CD14-positive monocyte (primary cell): ENCODE measurements at regions of chr4 and their contacts with region 1.

Region 1: GRCh38 chr4:105146276-105147015 is at the start of gene TET2:
- DNase-seq: peak; percentile 91 to 92 (median 91)
- H3K4me3 ChIP-seq: peak within 1 kb of the TSS; percentile 99 to 100 (median 99)
- H3K4me3 Mint-ChIP-seq: peak within 1 kb of the TSS; percentile 96 to 99
- H3K27ac ChIP-seq: peak within 1 kb of the TSS; percentile 99 to 100
- H3K27ac Mint-ChIP-seq: peak within 1 kb of the TSS; percentile 100
- H3K4me1 ChIP-seq: peaks cover 39 to 48% of the 10 kb centered on the region in 2 donors
- H3K4me1 Mint-ChIP-seq: peaks cover 50% of the 10 kb centered on the region
- H3K27me3 ChIP-seq: no peaks in the 10 kb centered on the region
- H3K27me3 Mint-ChIP-seq: peaks cover 0 to 2% (median 0%) of the 10 kb centered on the region in 3 donors
- CTCF ChIP-seq: peak; percentile 6
- polyA plus RNA-seq, gene TET2: 22.6 to 47.1 (median 42.5) TPM

Region 2: DNA sequence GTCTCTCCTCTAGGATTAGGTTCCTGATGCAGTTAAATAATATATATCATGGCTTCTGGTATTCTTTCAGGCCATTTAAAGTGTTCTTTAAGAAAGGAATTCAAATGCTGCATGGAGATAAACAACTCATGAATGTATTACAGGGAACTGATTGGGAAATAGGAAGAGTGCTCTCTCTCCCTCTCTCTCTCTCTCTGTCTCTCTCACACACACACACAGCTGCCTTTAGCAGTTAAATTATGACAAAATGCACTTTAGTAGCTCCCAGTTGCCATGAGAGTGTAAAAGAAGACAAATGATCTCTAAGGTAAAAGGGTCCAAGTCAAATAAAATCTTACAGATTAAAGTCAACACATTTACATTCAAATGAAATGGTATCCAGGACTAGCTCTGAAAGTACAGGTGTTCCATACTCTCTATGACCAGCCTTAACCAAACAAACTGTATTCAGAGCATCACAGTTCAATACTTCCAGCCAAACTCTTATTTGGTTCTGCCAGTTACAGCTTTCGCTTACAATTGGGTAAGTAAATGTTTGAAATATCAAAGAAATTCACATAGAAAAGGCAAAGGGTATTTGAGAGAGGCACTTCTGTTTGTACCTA is 557.1 kb before region 1 on chr4:
- intact Hi-C with region 1: no loop called
- DNase-seq: no peak
- H3K4me3 ChIP-seq: no peak overlapping the region
- H3K4me3 Mint-ChIP-seq: no peak overlapping the region
- H3K27ac ChIP-seq: no peak overlapping the region
- H3K27ac Mint-ChIP-seq: no peak overlapping the region
- H3K4me1 ChIP-seq: no peaks in the 10 kb centered on the region
- H3K4me1 Mint-ChIP-seq: no peaks in the 10 kb centered on the region
- H3K27me3 ChIP-seq: no peaks in the 10 kb centered on the region
- H3K27me3 Mint-ChIP-seq: peaks cover 0 to 3% (median 1%) of the 10 kb centered on the region in 3 donors
- CTCF ChIP-seq: no peak

Region 3: GRCh38 chr4:105061136-105061696 is 85.2 kb before region 1 on chr4:
- intact Hi-C with region 1: loop called (anchors 5 kb)
- DNase-seq: peak; percentile 81 to 92 (median 90)
- H3K4me3 ChIP-seq: peak overlapping the region; percentile 8 to 53 (median 37)
- H3K4me3 Mint-ChIP-seq: peak overlapping the region; percentile 49 to 72
- H3K27ac ChIP-seq: peak overlapping the region; percentile 67 to 94
- H3K27ac Mint-ChIP-seq: peak overlapping the region; percentile 97 to 100 (median 99)
- H3K4me1 ChIP-seq: peaks cover 73 to 79% of the 10 kb centered on the region in 2 donors
- H3K4me1 Mint-ChIP-seq: peaks cover 76% of the 10 kb centered on the region
- H3K27me3 ChIP-seq: no peaks in the 10 kb centered on the region
- H3K27me3 Mint-ChIP-seq: peaks cover 0 to 3% (median 0%) of the 10 kb centered on the region in 3 donors
- CTCF ChIP-seq: no peak

Region 4: GRCh38 chr4:105179539-105180401 is 33.3 kb after region 1 on chr4:
- intact Hi-C with region 1: loop called in 1 of 2 experiments (anchors 5 kb)
- DNase-seq: no peak
- H3K4me3 ChIP-seq: no peak overlapping the region
- H3K4me3 Mint-ChIP-seq: no peak overlapping the region
- H3K27ac ChIP-seq: peak overlapping the region in 1 of 2 donors; percentile 47
- H3K27ac Mint-ChIP-seq: peak overlapping the region in 1 of 7 donors; percentile 4
- H3K4me1 ChIP-seq: no peaks in the 10 kb centered on the region
- H3K4me1 Mint-ChIP-seq: peaks cover 9% of the 10 kb centered on the region
- H3K27me3 ChIP-seq: no peaks in the 10 kb centered on the region
- H3K27me3 Mint-ChIP-seq: no peaks in the 10 kb centered on the region
- CTCF ChIP-seq: no peak

Region 5: DNA sequence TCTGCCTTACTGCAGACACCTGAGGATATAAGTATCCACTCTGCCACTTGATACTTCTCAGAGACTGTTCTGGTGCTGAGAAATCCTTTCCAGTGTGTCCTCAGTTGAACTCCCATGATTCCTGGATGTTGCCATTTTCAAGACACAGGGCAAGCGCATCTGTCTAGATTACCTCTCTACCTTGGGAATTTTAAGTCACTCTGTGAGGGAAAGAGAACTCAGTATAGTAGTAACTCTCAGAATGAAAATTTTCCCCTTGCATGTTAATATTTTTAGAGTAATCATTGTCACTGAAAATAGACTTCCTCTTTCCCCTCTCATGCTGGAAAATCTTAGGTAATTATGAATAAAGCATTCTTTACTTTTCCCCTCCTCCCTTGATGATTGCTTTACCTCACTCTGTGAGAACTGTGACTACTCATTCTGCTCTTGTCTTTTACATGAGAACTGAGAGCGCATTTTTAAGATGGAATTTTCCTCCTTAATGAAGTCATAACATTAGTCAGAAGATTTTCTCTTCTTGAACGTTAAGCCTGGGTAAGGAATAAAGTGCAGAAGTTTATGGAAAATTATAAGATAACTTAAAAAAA is 45.3 kb after region 1 on chr4:
- intact Hi-C with region 1: loop called in 1 of 2 experiments (anchors 10 kb)
- DNase-seq: peak; percentile 36 to 78 (median 58)
- H3K4me3 ChIP-seq: no peak overlapping the region
- H3K4me3 Mint-ChIP-seq: no peak overlapping the region
- H3K27ac ChIP-seq: peak overlapping the region in 1 of 2 donors; percentile 78
- H3K27ac Mint-ChIP-seq: peak overlapping the region; percentile 68 to 93 (median 86)
- H3K4me1 ChIP-seq: peaks cover 43 to 56% of the 10 kb centered on the region in 2 donors
- H3K4me1 Mint-ChIP-seq: peaks cover 66% of the 10 kb centered on the region
- H3K27me3 ChIP-seq: no peaks in the 10 kb centered on the region
- H3K27me3 Mint-ChIP-seq: no peaks in the 10 kb centered on the region
- CTCF ChIP-seq: no peak

Region 6: DNA sequence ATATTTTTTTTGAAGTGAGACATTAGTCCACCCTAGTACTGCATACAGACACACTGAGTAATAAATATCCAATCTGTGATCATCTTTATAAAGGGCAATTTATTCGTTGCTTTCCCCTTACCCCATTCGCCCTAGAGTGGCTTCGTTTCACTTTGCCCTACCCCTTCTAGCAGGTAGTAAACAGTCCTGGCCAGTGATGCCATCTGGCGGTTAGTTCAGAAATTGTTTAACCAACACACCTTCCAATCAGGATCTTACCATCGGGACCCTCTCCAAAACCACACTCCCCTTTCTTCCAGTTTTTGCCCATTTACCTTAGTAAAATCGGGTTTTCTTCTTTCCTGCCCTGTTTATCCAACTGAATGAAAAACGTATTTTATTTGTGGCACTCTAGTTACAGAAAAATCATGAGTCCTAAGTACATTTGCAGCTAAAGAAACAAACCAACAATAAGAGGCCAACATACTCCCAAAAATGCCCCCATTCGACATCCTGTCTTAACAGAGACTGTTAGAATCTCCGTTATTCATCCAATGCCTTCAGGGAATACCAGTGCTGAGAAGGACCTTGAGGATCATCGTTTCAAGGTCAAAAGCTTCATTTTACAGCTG is 325.2 kb after region 1 on chr4:
- intact Hi-C with region 1: loop called in 1 of 2 experiments (anchors 10 kb)
- DNase-seq: peak; percentile 56 to 82 (median 74)
- H3K4me3 ChIP-seq: peak overlapping the region in 2 of 3 experiments; percentile 37 to 66
- H3K4me3 Mint-ChIP-seq: peak overlapping the region; percentile 64 to 75
- H3K27ac ChIP-seq: peak overlapping the region in 1 of 2 donors; percentile 96
- H3K27ac Mint-ChIP-seq: peak overlapping the region; percentile 30 to 99 (median 90)
- H3K4me1 ChIP-seq: peaks cover 37 to 43% of the 10 kb centered on the region in 2 donors
- H3K4me1 Mint-ChIP-seq: peaks cover 47% of the 10 kb centered on the region
- H3K27me3 ChIP-seq: no peaks in the 10 kb centered on the region
- H3K27me3 Mint-ChIP-seq: peaks cover 0 to 3% (median 1%) of the 10 kb centered on the region in 3 donors
- CTCF ChIP-seq: peak; percentile 84